AG04449 (cell line): ENCODE measurements at regions of chr2 and their contacts with region 1.

Region 1: GRCh38 chr2:23475036-23475435 is 90.1 kb downstream of the KLHL29 start:
- DNase-seq: no peak
- H3K4me3 ChIP-seq: no peak overlapping the region
- CTCF ChIP-seq: no peak

Region 2: GRCh38 chr2:23092831-23093230 is 382.2 kb before region 1 on chr2:
- CTCF ChIA-PET with region 1: no interaction called
- POLR2A ChIA-PET with region 1: no interaction called
- DNase-seq: no peak
- H3K4me3 ChIP-seq: no peak overlapping the region
- CTCF ChIP-seq: no peak

Region 3: DNA sequence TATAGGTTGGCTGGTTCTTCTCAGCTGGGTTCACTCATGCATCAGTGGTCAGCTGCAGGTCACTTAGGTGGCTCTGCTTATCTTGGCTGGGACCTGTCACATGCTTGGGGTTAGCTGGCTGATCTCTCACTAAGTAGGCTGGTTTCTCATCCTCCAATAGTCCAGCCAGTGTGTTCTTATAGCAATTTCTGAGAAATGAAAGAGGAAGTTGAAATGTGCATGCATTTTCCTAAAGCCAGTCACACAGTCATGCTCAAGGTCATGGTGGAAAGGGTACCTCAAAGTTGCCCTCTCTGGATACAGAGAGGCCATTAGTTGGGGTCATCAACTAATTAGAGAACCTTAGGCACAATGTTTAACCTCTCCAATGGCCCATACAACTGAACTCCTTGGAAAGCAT is 25.6 kb before region 1 on chr2:
- CTCF ChIA-PET with region 1: no interaction called
- POLR2A ChIA-PET with region 1: no interaction called
- DNase-seq: no peak
- H3K4me3 ChIP-seq: no peak overlapping the region
- CTCF ChIP-seq: no peak

Region 4: GRCh38 chr2:23460228-23460627 is 14.8 kb before region 1 on chr2:
- CTCF ChIA-PET with region 1: interaction called, 10 read pairs
- POLR2A ChIA-PET with region 1: no interaction called
- DNase-seq: no peak
- H3K4me3 ChIP-seq: no peak overlapping the region
- CTCF ChIP-seq: peak; percentile 39